Breast epithelium (tissue), 4 donors: ENCODE measurements at regions of chr18 and their contacts with region 1.

Region 1: DNA sequence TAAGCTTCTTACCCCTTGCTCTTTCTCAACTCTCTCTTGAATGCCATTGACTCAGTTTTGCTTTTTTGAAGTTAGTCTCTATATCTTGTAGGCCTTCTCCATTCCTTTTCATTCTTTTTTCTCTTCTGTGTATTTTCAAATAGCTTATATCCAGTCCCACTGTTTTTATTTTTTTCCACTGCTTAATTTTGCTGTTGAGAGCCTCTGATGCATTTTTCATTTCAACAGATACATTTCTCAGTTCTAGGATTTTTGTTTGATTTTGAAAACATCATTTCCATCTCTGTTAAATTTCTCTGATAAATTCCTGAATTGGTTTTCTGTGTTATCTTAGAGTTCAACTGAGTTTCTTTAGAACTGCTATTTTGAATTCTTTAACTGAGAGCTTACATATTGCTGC is 45.9 kb downstream of the MIB1 start:
- DNase-seq: no peak
- H3K4me3 ChIP-seq: no peak overlapping the region
- H3K27ac ChIP-seq: no peak overlapping the region
- H3K4me1 ChIP-seq: no peaks in the 10 kb centered on the region
- H3K27me3 ChIP-seq: no peaks in the 10 kb centered on the region
- CTCF ChIP-seq: no peak
- POLR2A ChIP-seq: no peak

Region 2: GRCh38 chr18:21803495-21803894 is 17.0 kb after region 1 on chr18:
- intact Hi-C with region 1: loop called (anchors 1 kb)
- DNase-seq: no peak
- H3K4me3 ChIP-seq: no peak overlapping the region
- H3K27ac ChIP-seq: peak overlapping the region in 1 of 2 donors; percentile 22
- H3K4me1 ChIP-seq: no peaks in the 10 kb centered on the region
- H3K27me3 ChIP-seq: no peaks in the 10 kb centered on the region
- CTCF ChIP-seq: no peak
- POLR2A ChIP-seq: no peak